ENCODE measurements at regions of chr4 and their contacts with region 1.

Region 1: GRCh38 chr4:38856524-38857337 is at the start of gene TLR6:
- DNase-seq: peak in 1 of 3 donors; percentile 89
- ATAC-seq: peak; percentile 83
- H3K4me3 ChIP-seq: no peak within 1 kb of the TSS
- H3K4me1 ChIP-seq: peaks cover 3% of the 10 kb centered on the region
- CTCF ChIP-seq: peak; percentile 70
- total RNA-seq, gene TLR6: 1.3 to 3.6 (median 2.3) TPM

Region 2: DNA sequence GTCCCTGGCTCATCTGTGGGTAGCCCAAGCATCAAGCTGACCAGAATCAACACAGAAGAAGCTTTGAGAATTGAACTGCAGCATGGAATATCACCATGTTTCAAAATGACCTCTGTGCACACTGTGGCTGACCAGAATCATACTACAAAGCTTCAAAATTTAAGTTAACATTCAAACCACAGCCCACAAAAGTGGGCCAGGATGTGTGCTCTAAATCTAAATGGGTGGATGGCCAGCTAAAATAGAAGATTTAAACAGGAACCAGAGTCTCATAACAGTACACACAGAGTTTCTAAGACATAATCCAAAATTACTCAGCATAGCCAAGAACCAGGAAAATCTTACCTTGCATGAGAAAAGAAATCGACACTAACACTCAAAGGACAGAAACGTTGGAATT is 146.7 kb before region 1 on chr4:
- intact Hi-C with region 1: no loop called
- DNase-seq: no peak
- ATAC-seq: no peak
- H3K4me3 ChIP-seq: no peak overlapping the region
- H3K4me1 ChIP-seq: no peaks in the 10 kb centered on the region
- CTCF ChIP-seq: no peak

Region 3: DNA sequence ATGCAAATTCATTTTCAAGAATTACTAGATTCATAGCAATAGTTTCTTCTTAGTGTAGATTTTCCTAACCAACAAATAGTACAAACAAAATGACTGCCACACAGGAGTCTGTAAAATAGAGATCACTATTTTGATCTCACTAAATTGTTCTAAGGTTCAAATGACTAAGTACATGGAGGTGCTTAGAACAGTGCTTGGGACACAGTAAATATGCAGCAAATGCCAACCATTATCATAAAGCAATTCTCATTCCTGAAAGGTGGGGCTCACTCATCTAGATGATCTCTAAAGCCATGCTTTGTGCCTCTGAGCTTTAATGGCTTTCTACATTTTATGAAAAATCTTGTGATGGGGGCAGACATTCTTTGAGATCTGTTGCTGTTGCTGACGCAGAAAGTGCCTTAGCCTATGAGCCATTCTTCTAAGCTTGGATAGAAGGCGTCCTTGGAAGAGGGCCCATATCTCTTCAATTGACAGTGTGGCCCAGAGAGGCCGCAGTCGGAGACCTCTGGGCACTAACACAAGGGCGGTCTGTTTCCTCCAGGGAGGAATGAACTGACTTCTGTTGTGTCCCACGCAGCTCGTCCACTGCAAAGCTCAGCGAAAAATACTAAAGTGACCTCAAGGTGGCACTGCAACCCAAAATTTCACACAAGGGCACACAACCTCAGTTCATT is 97.5 kb before region 1 on chr4:
- intact Hi-C with region 1: loop called in 1 of 2 experiments (anchors 5 kb)
- DNase-seq: peak in 2 of 3 donors; percentile 52 to 65
- ATAC-seq: peak; percentile 64
- H3K4me3 ChIP-seq: no peak overlapping the region
- H3K4me1 ChIP-seq: peaks cover 2% of the 10 kb centered on the region
- CTCF ChIP-seq: peak; percentile 32

Region 4: DNA sequence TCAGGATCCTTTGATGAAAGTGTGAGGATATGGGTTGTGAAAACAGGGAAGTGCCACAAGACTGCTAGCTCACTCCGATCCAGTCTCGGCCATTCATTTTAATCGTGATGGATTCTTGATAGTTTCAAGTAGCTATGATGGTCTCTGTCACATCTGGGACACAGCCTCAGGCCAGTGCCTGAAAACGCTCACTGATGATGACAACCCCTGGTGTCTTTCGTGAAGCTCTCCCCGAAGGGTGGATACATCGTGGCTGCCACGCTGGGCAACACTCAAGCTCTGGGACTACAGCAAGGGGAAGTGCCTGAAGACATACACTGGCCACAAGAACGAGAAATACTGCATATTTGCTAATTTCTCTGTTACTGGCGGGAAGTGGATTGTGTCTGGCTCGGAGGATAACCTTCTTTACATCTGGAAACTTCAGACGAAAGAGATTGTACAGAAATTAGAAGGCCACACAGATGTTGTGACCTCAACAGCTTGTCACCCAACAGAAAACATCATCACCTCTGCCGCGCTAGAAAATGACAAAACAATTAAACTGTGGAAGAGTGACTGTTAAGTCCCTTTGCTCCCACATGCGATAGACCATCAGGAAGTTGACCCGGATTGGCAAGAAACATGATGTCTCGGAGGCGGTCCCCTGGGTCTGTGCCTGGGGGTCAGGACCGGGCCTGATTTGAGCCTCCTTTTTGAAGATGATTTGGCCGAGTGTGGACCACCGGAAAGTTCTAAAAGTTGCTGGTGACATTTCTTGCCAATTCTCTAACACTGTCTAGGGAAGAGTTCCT is 624.4 kb after region 1 on chr4:
- intact Hi-C with region 1: no loop called
- DNase-seq: no peak
- ATAC-seq: peak; percentile 24
- H3K4me3 ChIP-seq: no peak overlapping the region
- H3K4me1 ChIP-seq: no peaks in the 10 kb centered on the region
- CTCF ChIP-seq: no peak